ENCODE measurements at regions of chr1 and their contacts with region 1.

Region 1: DNA sequence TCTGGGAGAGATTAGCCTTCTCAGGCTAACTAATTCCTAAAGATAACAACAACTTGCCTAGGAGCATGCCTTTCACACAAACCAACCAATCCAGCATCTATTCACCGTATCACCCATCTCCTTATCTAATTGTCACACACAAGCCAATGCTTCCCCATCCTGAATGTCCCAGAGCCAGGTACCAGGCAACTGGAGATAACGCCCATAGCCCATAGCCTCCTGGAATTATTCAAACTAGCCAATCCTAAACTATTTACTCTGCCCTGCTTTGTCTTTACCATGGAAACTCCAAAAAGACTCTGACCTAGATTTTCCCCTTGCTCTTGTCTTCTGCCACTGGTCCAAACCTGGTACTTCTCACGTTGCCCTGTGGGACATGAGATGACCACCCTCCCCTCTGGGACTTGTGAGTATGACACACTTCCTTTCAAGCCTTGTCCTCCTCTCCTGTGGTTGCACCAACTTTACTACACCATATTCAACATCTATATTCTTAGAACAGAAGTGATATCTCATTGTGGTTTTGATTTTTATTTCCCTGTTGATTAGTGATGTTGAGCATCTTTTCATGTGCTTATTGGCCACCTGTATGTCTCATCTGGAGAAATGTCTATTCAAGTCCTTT is 8.8 kb upstream of the ATG4C start:
- DNase-seq: no peak
- H3K4me3 ChIP-seq: no peak overlapping the region
- H3K27ac ChIP-seq: no peak overlapping the region
- H3K4me1 ChIP-seq: no peaks in the 10 kb centered on the region
- H3K27me3 ChIP-seq: no peaks in the 10 kb centered on the region
- CTCF ChIP-seq: no peak
- EP300 ChIP-seq: no peak
- POLR2A ChIP-seq: no peak

Region 2: GRCh38 chr1:61967750-61968149 is 807.3 kb before region 1 on chr1:
- in situ Hi-C with region 1: no loop called
- intact Hi-C with region 1: loop called (anchors 5 kb)
- DNase-seq: no peak
- H3K4me3 ChIP-seq: no peak overlapping the region
- H3K27ac ChIP-seq: no peak overlapping the region
- H3K4me1 ChIP-seq: no peaks in the 10 kb centered on the region
- H3K27me3 ChIP-seq: no peaks in the 10 kb centered on the region
- CTCF ChIP-seq: no peak
- EP300 ChIP-seq: no peak
- POLR2A ChIP-seq: no peak

Region 3: GRCh38 chr1:62436466-62437256 is 338.4 kb before region 1 on chr1 and contains the start of gene USP1:
- in situ Hi-C with region 1: no loop called
- intact Hi-C with region 1: no loop called
- DNase-seq: peak; percentile 97
- H3K4me3 ChIP-seq: peak within 1 kb of the TSS; percentile 69 to 99 (median 84)
- H3K27ac ChIP-seq: peak within 1 kb of the TSS; percentile 94 to 100 (median 96)
- H3K4me1 ChIP-seq: peaks cover 19 to 33% (median 28%) of the 10 kb centered on the region in 4 donors
- H3K27me3 ChIP-seq: no peaks in the 10 kb centered on the region
- CTCF ChIP-seq: peak in 1 of 5 experiments; percentile 32
- EP300 ChIP-seq: peak; percentile 15
- POLR2A ChIP-seq: peak; percentile 52
- total RNA-seq, gene USP1: 6.0 to 26.7 (median 25.0) TPM

Measured in transverse colon (tissue), 4 donors.